Left cardiac atrium (tissue), 4 donors: ENCODE measurements at regions of chr22 and their contacts with region 1.

Region 1: DNA sequence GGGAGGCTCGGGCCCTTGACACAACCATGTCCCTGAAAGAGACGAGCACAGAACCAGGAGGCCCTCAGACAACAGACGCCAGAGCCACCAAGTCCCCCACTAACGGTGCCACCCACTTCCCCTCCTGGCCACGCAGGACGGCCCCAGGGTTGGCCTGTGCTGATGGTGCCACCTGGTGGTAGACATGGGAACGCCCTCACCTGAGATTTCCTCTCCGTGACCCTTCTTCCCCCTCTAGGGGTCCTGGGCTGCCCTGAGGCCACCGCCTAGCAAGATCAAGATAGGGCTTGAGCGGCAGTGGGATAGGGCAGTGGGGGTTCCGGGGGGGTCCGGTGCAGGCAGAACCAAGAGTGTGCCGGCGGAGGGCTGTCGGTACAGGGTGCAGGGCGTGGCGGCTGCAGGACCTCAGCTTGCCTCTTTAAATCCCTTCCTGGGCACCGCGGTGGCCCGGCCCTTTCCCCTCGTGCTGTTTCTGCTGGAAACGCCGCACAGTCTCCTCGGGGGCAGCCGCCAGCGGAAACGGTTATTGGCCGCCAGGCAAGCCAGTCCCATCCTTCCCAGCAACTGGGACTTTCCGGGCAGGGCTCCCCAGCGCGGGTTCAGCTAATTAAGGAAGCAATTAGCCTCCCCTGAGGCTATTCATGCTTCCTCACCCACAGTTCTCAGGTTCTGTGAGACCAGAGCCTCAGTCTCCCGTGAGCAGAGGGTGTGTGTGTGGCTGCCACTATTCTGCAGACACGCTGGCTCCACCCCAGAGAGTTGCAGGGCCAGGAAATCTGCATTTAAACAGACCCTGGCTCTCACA is 5.5 kb upstream of the NFAM1 start:
- DNase-seq: peak; percentile 79
- ATAC-seq: peak; percentile 85 to 87

Region 2: GRCh38 chr22:42090596-42091454 is 346.9 kb before region 1 on chr22 and contains the start of gene NDUFA6:
- intact Hi-C with region 1: loop called in 1 of 2 experiments (anchors 10 kb)
- DNase-seq: peak; percentile 99
- ATAC-seq: peak; percentile 98
- total RNA-seq, gene NDUFA6: 224 to 247 TPM

Region 3: GRCh38 chr22:42169055-42169469 is 268.6 kb before region 1 on chr22:
- intact Hi-C with region 1: loop called (anchors 1 to 5 kb)
- DNase-seq: peak; percentile 66
- ATAC-seq: peak; percentile 70 to 90

Region 4: GRCh38 chr22:42270512-42271417 is 166.9 kb before region 1 on chr22 and contains the start of gene TCF20:
- intact Hi-C with region 1: loop called in 1 of 2 experiments (anchors 10 kb)
- DNase-seq: peak; percentile 83
- ATAC-seq: peak; percentile 67 to 87
- total RNA-seq, gene TCF20: 13.9 to 18.2 TPM

Region 5: GRCh38 chr22:42376711-42377554 is 60.8 kb before region 1 on chr22:
- intact Hi-C with region 1: no loop called
- DNase-seq: peak; percentile 75
- ATAC-seq: peak; percentile 74 to 89